ENCODE measurements at regions of chr20 and their contacts with region 1.

Region 1: GRCh38 chr20:36886859-36887751 is 11.2 kb downstream of the TLDC2 start:
- DNase-seq: peak; percentile 73 to 89 (median 77)
- ATAC-seq: peak; percentile 40 to 89 (median 86)
- H3K4me3 ChIP-seq: peak overlapping the region in 2 of 12 donors; percentile 7 to 15
- H3K27ac ChIP-seq: no peak overlapping the region
- H3K4me1 ChIP-seq: peaks cover 0 to 26% (median 8%) of the 10 kb centered on the region in 12 donors
- H3K27me3 ChIP-seq: no peaks in the 10 kb centered on the region
- CTCF ChIP-seq: peak; percentile 86 to 97 (median 94)
- POLR2A ChIP-seq: no peak

Region 2: DNA sequence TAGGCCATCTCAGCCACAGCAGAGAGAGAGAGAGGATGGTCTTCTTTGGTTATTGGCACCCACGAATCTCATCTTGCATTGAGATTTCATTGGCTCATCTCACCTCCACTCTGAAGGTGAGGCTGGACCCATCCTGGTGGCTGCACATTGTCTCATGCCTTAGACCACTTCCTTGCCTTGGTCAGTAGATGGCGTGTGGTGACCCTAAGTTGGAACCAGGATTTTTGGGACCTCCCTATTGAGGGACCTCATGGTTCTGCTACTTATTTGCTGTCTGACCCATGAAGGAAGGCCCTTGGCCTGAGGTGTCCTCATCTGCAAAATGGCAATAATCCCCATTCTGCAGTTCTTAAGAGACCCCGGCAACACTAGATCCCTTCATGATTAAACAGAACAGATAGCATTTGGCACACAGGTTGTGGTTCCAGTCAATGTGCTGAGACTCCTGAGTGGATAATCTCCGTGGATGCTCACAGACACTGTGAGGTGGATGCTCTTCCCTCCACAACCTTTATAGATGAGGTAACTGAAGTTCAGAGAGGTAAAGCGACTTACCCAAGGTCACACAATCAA is 672.3 kb before region 1 on chr20:
- intact Hi-C with region 1: loop called in 2 of 10 experiments (anchors 10 kb)
- DNase-seq: no peak
- ATAC-seq: peak in 3 of 4 donors; percentile 44 to 63 (median 45)
- H3K4me3 ChIP-seq: no peak overlapping the region
- H3K27ac ChIP-seq: no peak overlapping the region
- H3K4me1 ChIP-seq: no peaks in the 10 kb centered on the region
- H3K27me3 ChIP-seq: no peaks in the 10 kb centered on the region
- CTCF ChIP-seq: peak; percentile 21 to 59 (median 47)
- POLR2A ChIP-seq: no peak

Region 3: DNA sequence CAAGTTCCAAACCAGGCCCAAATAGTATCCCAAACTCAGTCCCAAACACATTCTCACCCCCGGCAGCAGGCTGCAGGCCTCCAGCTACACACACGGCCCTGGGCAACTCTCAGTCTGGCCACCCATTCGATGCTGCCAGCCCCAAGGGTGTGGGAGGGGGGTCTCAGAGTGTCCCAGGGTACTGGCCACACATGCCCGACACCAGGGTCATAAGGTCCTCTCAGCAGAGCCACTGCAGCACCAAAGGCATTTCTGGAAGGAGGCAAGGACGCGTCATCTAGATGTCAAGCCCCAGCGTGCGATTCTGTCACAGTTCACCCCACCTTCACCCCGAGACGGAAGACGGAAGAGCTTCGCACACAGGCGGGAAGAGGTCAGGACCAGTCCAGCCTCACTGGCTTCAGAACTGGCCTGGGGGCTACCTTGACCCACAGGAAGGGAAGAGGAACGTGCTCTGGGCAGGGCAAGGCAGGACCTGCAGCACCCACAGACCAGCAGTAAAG is 336.3 kb before region 1 on chr20:
- intact Hi-C with region 1: loop called in 3 of 10 experiments (anchors 5 to 10 kb)
- DNase-seq: no peak
- ATAC-seq: peak; percentile 32 to 43 (median 37)
- H3K4me3 ChIP-seq: no peak overlapping the region
- H3K27ac ChIP-seq: peak overlapping the region in 10 of 12 donors; percentile 9 to 75 (median 48)
- H3K4me1 ChIP-seq: peaks cover 0 to 45% (median 5%) of the 10 kb centered on the region in 12 donors
- H3K27me3 ChIP-seq: no peaks in the 10 kb centered on the region
- CTCF ChIP-seq: no peak
- POLR2A ChIP-seq: no peak

Region 4: GRCh38 chr20:36613974-36614373 is 273.1 kb before region 1 on chr20:
- intact Hi-C with region 1: loop called in 4 of 10 experiments (anchors 5 to 10 kb)
- DNase-seq: no peak
- ATAC-seq: peak in 1 of 4 donors; percentile 14
- H3K4me3 ChIP-seq: no peak overlapping the region
- H3K27ac ChIP-seq: no peak overlapping the region
- H3K4me1 ChIP-seq: no peaks in the 10 kb centered on the region
- H3K27me3 ChIP-seq: no peaks in the 10 kb centered on the region
- CTCF ChIP-seq: no peak
- POLR2A ChIP-seq: no peak

Region 5: DNA sequence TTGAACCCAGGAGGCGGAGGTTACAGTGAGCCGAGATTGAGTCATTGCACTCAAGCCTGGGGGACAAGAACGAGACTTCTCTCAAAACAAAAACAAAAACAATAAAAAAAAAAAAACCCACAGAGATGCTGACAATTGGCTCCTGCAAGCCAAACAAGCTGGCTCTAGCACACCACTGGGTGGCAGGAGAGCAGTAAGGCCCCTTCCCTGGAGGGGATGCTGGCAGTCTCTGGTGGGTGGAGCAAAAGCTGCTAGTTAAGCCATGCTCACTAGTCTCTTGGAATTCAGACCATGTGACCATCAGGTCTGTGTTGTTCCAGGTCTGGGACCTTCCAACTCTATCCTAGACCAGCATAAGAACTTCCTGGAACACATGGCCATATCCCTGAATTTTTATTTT is 94.7 kb before region 1 on chr20:
- intact Hi-C with region 1: loop called in 3 of 10 experiments (anchors 2 to 5 kb)
- DNase-seq: peak in 4 of 5 donors; percentile 41 to 66 (median 65)
- ATAC-seq: peak; percentile 37 to 72 (median 66)
- H3K4me3 ChIP-seq: no peak overlapping the region
- H3K27ac ChIP-seq: no peak overlapping the region
- H3K4me1 ChIP-seq: peaks cover 0 to 17% (median 2%) of the 10 kb centered on the region in 12 donors
- H3K27me3 ChIP-seq: no peaks in the 10 kb centered on the region
- CTCF ChIP-seq: peak in 11 of 12 donors; percentile 7 to 59 (median 44)
- POLR2A ChIP-seq: no peak

Measured in heart left ventricle (tissue), 16 donors.